ENCODE measurements at regions of chr13 and their contacts with region 1.

Region 1: DNA sequence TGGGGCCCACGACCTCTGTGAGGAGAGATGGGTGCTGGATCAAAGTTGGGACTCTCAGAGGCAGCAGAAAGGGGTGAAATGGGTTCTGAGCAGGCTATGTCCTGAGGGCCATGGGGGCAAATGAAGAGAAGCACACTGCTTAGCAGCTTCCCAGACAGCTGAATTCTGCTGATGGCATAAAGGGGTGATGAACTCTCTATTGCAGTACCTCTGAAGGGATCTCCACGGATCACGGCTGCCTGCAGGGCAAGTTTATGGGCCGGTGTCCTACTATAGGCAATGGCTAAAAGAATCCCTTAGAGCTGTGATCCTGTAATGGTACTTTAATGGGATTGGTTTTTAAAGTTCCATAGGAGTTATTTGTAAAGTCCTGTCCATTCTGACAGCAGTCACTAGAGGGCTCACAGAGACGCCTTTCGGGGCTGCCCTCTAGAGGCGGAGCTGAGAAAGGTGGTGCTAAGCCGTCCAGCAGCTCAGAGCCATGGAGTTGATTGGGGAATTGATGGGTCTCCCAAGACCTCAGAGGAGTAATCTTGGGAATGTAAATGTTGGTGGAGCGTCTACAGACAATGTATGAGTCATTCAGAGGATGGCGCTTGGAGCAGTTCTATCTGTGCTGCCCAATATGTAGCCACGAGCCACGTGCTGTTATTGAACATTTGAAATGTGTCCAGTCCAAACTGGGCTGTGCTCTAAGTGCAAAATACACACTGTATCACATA is 287.3 kb downstream of the COG6 start:
- DNase-seq: peak; percentile 55 to 67 (median 63)
- H3K4me3 ChIP-seq: no peak overlapping the region
- H3K4me3 Mint-ChIP-seq: peak overlapping the region in 1 of 8 donors; percentile 20
- H3K27ac ChIP-seq: no peak overlapping the region
- H3K27ac Mint-ChIP-seq: peak overlapping the region in 1 of 7 donors; percentile 43
- H3K4me1 ChIP-seq: no peaks in the 10 kb centered on the region
- H3K4me1 Mint-ChIP-seq: peaks cover 3 to 13% (median 6%) of the 10 kb centered on the region in 4 donors
- H3K27me3 ChIP-seq: no peaks in the 10 kb centered on the region
- H3K27me3 Mint-ChIP-seq: peaks cover 0 to 1% of the 10 kb centered on the region in 2 donors

Region 2: DNA sequence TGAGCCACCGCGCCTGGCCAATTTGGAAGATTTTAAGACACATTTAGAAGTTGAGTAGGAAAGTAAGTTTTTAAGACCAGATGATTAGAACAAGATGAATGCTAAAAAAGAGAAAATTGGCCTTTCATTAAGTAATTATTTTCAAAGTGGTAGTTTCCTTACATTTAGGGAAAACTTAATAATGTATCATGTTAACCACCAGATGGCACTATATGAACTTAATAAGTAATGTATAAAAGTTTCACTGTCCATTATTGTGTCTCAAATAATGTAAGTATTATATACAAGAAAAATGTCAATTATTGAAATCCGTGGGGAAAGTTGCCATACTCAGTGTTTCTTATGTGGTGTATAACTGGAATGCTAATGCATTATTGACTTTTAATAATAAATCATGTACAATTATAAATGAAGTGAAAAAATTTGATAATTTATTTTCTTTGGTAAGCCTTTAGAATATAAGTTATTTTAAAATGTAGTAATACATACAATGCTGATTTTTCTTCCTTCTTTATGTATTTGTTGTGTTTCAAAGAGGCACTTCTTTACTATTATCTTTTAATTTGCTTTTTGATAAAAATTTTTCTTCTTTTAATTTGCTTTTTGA is 258.1 kb before region 1 on chr13:
- CTCF ChIA-PET with region 1: interaction called, 8 read pairs
- POLR2A ChIA-PET with region 1: no interaction called
- intact Hi-C with region 1: loop called (anchors 1 kb)
- DNase-seq: peak in 4 of 5 donors; percentile 26 to 41 (median 29)
- H3K4me3 ChIP-seq: no peak overlapping the region
- H3K4me3 Mint-ChIP-seq: no peak overlapping the region
- H3K27ac ChIP-seq: no peak overlapping the region
- H3K27ac Mint-ChIP-seq: no peak overlapping the region
- H3K4me1 ChIP-seq: no peaks in the 10 kb centered on the region
- H3K4me1 Mint-ChIP-seq: peaks cover 0 to 16% (median 6%) of the 10 kb centered on the region in 4 donors
- H3K27me3 ChIP-seq: no peaks in the 10 kb centered on the region
- H3K27me3 Mint-ChIP-seq: no peaks in the 10 kb centered on the region

Region 3: DNA sequence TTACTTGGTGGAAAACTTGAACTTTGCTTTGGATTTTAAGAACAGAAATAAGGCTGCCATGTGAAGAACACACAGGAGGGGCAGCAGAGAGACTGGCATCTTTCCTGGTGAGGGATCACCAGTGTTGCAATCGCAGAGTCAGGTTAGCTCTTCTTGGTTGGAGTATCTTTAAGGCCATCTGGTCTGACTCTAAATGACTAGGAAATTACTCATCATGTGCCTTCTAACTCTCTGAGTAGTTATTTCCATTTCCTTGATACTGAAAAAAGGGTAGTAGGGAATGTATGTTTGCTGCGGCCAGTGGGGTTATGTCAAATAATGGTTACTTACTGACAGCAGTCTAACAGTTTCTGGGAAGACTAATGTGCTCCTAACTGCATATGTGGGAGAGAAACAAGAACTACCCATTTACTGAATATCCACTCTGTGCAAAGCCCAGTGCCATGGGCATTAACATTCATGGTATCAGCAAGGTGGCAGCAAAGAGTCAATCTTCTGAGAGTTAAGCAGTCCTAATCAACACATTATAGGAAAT is 165.1 kb before region 1 on chr13:
- CTCF ChIA-PET with region 1: interaction called, 102 read pairs
- POLR2A ChIA-PET with region 1: interaction called, 5 read pairs
- intact Hi-C with region 1: loop called (anchors 1 kb)
- DNase-seq: peak; percentile 28 to 51 (median 37)
- H3K4me3 ChIP-seq: no peak overlapping the region
- H3K4me3 Mint-ChIP-seq: no peak overlapping the region
- H3K27ac ChIP-seq: no peak overlapping the region
- H3K27ac Mint-ChIP-seq: peak overlapping the region in 5 of 7 donors; percentile 22 to 78 (median 62)
- H3K4me1 ChIP-seq: peaks cover 29% of the 10 kb centered on the region
- H3K4me1 Mint-ChIP-seq: peaks cover 25 to 33% (median 29%) of the 10 kb centered on the region in 4 donors
- H3K27me3 ChIP-seq: no peaks in the 10 kb centered on the region
- H3K27me3 Mint-ChIP-seq: no peaks in the 10 kb centered on the region

Region 4: DNA sequence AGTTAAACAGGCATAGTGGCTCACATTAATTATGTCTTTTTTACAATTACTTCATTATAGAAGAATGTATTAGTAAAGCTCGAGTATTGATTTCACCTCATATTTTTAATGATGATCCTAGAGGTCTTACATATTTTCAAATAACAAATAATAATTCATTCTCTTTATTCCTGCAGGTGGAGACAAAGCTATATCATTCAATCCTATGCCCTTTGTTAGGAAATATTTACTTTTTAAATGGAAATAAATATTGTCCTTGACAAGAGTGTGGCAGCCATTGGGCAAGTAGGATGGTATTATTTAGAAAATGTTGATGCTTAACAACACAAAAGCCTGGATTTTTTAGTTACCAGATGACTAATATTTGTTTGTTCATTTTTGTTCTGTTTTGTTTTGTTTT is 159.7 kb before region 1 on chr13:
- CTCF ChIA-PET with region 1: interaction called, 102 read pairs
- POLR2A ChIA-PET with region 1: interaction called, 5 read pairs
- intact Hi-C with region 1: loop called (anchors 1 kb)
- DNase-seq: no peak
- H3K4me3 ChIP-seq: no peak overlapping the region
- H3K4me3 Mint-ChIP-seq: no peak overlapping the region
- H3K27ac ChIP-seq: no peak overlapping the region
- H3K27ac Mint-ChIP-seq: no peak overlapping the region
- H3K4me1 ChIP-seq: peaks cover 21% of the 10 kb centered on the region
- H3K4me1 Mint-ChIP-seq: peaks cover 15 to 20% (median 19%) of the 10 kb centered on the region in 4 donors
- H3K27me3 ChIP-seq: no peaks in the 10 kb centered on the region
- H3K27me3 Mint-ChIP-seq: peaks cover 0 to 2% of the 10 kb centered on the region in 2 donors

Region 5: GRCh38 chr13:40026174-40026585 is 83.5 kb after region 1 on chr13:
- CTCF ChIA-PET with region 1: interaction called, 10 read pairs
- POLR2A ChIA-PET with region 1: no interaction called
- intact Hi-C with region 1: no loop called
- DNase-seq: peak; percentile 26 to 54 (median 40)
- H3K4me3 ChIP-seq: peak overlapping the region; percentile 7 to 50
- H3K4me3 Mint-ChIP-seq: peak overlapping the region; percentile 61 to 91 (median 80)
- H3K27ac ChIP-seq: no peak overlapping the region
- H3K27ac Mint-ChIP-seq: peak overlapping the region; percentile 3 to 86 (median 60)
- H3K4me1 ChIP-seq: peaks cover 15% of the 10 kb centered on the region
- H3K4me1 Mint-ChIP-seq: peaks cover 16 to 31% (median 18%) of the 10 kb centered on the region in 4 donors
- H3K27me3 ChIP-seq: no peaks in the 10 kb centered on the region
- H3K27me3 Mint-ChIP-seq: no peaks in the 10 kb centered on the region

Region 6: GRCh38 chr13:40164133-40164532 is 221.4 kb after region 1 on chr13:
- CTCF ChIA-PET with region 1: no interaction called
- POLR2A ChIA-PET with region 1: no interaction called
- intact Hi-C with region 1: no loop called
- DNase-seq: no peak
- H3K4me3 ChIP-seq: no peak overlapping the region
- H3K4me3 Mint-ChIP-seq: no peak overlapping the region
- H3K27ac ChIP-seq: no peak overlapping the region
- H3K27ac Mint-ChIP-seq: no peak overlapping the region
- H3K4me1 ChIP-seq: no peaks in the 10 kb centered on the region
- H3K4me1 Mint-ChIP-seq: peaks cover 4 to 22% (median 13%) of the 10 kb centered on the region in 4 donors
- H3K27me3 ChIP-seq: no peaks in the 10 kb centered on the region
- H3K27me3 Mint-ChIP-seq: no peaks in the 10 kb centered on the region

Measured in CD4-positive, alpha-beta memory T cell (primary cell).